HEK293 (cell line): ENCODE measurements at regions of chr11 and their contacts with region 1.

Region 1: DNA sequence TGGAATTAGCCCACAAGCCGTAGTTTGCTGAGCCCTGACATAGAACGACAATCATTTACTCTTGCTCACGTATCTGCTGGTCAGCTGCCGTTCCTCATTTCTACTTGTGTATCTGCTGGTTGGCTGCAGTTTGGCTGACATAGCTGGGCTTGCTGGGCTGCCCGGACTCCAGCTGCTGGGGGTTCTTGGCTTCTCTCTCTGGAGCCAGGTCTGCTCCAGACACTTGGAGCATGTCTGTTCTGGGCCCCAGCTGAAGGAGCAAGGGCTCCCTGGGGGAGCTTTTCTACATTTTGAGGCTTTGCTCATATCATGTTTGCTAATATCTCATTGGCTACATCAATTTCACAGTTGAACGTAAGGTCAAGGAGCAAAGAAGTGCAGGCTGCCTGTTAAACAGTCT is 47.3 kb downstream of the PRDM11 start:
- H3K4me3 ChIP-seq: no peak overlapping the region
- H3K27ac ChIP-seq: no peak overlapping the region
- H3K4me1 ChIP-seq: no peaks in the 10 kb centered on the region
- CTCF ChIP-seq: no peak

Region 2: GRCh38 chr11:45180843-45181266 is 12.8 kb before region 1 on chr11:
- CTCF ChIA-PET with region 1: interaction called, 15 read pairs
- POLR2A ChIA-PET with region 1: no interaction called
- H3K4me3 ChIP-seq: peak overlapping the region; percentile 40
- H3K27ac ChIP-seq: peak overlapping the region; percentile 56; the same call in 1 of the 2 replicates
- H3K4me1 ChIP-seq: no peaks in the 10 kb centered on the region
- CTCF ChIP-seq: peak; percentile 53

Region 3: DNA sequence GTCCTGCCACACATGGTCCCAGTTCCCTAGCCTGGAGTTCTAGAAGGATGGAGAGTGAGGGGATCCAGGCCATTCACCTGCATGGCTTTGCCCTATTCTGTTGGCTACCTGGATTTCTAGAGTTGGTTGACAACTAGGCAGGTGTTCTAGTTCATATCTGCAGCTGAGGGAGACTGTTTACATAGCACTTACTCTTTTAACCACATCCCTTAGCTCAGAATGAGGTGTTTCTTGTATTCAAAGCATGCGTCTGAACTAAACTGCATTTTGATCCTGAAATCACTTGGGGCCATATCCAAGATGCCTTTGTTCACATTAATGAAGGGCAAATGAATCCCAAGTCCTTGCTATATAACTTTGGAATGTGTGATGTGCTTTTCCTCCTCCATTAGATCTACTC is 31.6 kb after region 1 on chr11:
- CTCF ChIA-PET with region 1: no interaction called
- POLR2A ChIA-PET with region 1: no interaction called
- H3K4me3 ChIP-seq: no peak overlapping the region
- H3K27ac ChIP-seq: no peak overlapping the region
- H3K4me1 ChIP-seq: no peaks in the 10 kb centered on the region
- CTCF ChIP-seq: no peak

Region 4: DNA sequence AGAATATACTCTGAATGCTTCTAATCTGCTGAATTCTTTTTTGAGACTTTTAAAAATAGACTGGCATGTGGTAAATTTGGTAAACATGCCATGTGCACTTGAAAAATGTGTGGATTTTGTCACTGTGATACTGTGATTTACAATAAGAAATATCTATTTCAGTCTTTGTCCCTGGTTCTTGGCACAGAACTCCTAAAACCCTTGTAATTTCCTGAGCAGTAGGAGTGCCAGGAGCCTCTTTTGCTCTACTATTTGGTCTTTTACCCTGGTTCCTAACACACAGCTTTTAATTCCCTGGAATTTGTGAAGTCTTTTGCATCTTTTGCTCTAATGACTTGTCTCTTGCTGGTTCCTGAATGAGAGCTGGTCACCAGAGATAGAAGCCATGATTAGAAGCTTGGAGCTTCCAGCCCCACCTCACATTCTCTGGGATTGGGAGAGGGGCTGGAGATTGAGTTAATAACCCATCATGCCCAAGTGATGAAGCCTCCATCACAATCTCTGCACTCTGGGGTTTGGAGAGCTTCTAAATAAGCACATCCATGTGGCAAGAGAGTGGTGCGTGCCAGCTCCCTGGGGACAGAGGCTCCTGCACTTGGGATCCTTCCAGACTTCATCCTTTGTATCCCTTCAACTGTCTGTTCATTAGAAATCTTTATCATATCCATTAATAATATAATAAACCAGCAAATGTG is 119.6 kb after region 1 on chr11:
- CTCF ChIA-PET with region 1: no interaction called
- POLR2A ChIA-PET with region 1: no interaction called
- H3K4me3 ChIP-seq: no peak overlapping the region
- H3K27ac ChIP-seq: no peak overlapping the region
- H3K4me1 ChIP-seq: no peaks in the 10 kb centered on the region
- CTCF ChIP-seq: no peak